ENCODE measurements at regions of chr15 and their contacts with region 1.

Region 1: GRCh38 chr15:101294731-101295606 is at the start of gene SNRPA1:
- DNase-seq: peak; percentile 94 to 98 (median 98)
- ATAC-seq: peak; percentile 80
- H3K4me3 ChIP-seq: peak within 1 kb of the TSS; percentile 68 to 97
- H3K4me3 Mint-ChIP-seq: peak within 1 kb of the TSS; percentile 94
- H3K27ac ChIP-seq: peak within 1 kb of the TSS; percentile 95 to 98
- H3K27ac Mint-ChIP-seq: peak within 1 kb of the TSS; percentile 96
- H3K4me1 ChIP-seq: peaks cover 38% of the 10 kb centered on the region
- H3K4me1 Mint-ChIP-seq: peaks cover 53% of the 10 kb centered on the region
- H3K27me3 ChIP-seq: no peaks in the 10 kb centered on the region
- H3K27me3 Mint-ChIP-seq: no peaks in the 10 kb centered on the region
- CTCF ChIP-seq: no peak
- total RNA-seq, gene SNRPA1: 228 to 247 TPM

Region 2: GRCh38 chr15:100602064-100602822 is 692.7 kb before region 1 on chr15 and contains the starts of genes ASB7 and LINS1:
- CTCF ChIA-PET with region 1: no interaction called
- POLR2A ChIA-PET with region 1: interaction called, 3 read pairs
- intact Hi-C with region 1: loop called in 1 of 2 experiments (anchors 1 kb)
- DNase-seq: peak; percentile 99 to 100 (median 100)
- ATAC-seq: peak; percentile 89
- H3K4me3 ChIP-seq: peak within 1 kb of the TSS; percentile 90 to 95
- H3K4me3 Mint-ChIP-seq: no peak within 1 kb of the TSS
- H3K27ac ChIP-seq: peak within 1 kb of the TSS; percentile 71 to 94
- H3K27ac Mint-ChIP-seq: peak within 1 kb of the TSS; percentile 93
- H3K4me1 ChIP-seq: peaks cover 58% of the 10 kb centered on the region
- H3K4me1 Mint-ChIP-seq: peaks cover 64% of the 10 kb centered on the region
- H3K27me3 ChIP-seq: no peaks in the 10 kb centered on the region
- H3K27me3 Mint-ChIP-seq: no peaks in the 10 kb centered on the region
- CTCF ChIP-seq: no peak
- total RNA-seq, gene ASB7: 17.2 to 19.9 TPM
- total RNA-seq, gene LINS1: 42.8 to 45.9 TPM

Region 3: GRCh38 chr15:100958326-100959065 is 336.5 kb before region 1 on chr15:
- CTCF ChIA-PET with region 1: no interaction called
- POLR2A ChIA-PET with region 1: no interaction called
- intact Hi-C with region 1: no loop called
- DNase-seq: no peak
- ATAC-seq: no peak
- H3K4me3 ChIP-seq: no peak overlapping the region
- H3K4me3 Mint-ChIP-seq: no peak overlapping the region
- H3K27ac ChIP-seq: no peak overlapping the region
- H3K27ac Mint-ChIP-seq: no peak overlapping the region
- H3K4me1 ChIP-seq: no peaks in the 10 kb centered on the region
- H3K4me1 Mint-ChIP-seq: no peaks in the 10 kb centered on the region
- H3K27me3 ChIP-seq: no peaks in the 10 kb centered on the region
- H3K27me3 Mint-ChIP-seq: peaks cover 28% of the 10 kb centered on the region
- CTCF ChIP-seq: no peak

Region 4: DNA sequence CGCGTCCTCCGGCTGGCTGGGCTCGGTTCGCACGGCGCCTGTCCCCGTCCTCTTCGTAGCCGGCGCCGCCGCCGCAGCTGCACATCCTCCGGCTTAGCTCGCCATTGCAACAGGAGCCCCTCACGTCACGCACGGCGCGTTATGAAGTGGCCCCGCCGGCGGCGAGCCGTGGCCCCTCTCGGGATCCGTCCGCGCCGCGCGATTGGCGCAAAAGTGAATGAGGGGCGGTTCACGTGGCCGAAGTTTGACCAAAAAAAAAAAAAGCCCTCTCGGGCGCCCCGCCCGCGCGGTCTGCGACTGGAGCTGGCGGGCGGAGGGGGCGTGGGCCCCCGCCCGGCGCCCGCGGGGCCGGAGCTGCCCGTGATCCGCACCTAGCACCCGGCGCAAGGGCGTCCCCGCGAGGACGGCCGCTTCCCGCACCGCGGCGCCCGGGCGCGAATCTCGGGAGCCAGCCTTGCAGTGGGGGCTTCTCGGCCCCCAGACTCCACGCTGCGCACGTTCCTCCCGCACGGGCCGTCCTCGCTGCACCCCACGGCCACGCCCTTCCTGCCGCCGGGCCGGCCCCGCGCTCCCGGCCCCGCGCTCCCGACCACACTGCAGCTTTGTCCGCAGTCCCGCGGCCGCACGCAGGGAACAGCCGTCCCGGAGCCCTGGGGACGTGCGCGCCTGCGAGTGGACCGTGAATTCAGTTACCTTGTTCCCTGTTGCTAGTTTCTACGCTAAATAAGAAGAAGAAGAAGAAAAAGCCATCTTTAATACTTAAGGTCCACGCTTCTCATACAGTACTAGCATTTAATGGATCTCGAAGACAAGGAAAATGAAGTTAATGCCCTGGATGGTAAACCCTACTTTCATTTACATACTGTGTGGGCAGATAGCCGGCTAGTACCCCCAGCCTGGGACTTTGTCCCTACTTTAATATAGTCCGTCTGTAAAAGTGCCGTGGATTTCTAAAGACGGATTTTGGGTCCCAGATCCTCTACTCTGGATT is 42.8 kb before region 1 on chr15 and contains the start of gene CHSY1:
- CTCF ChIA-PET with region 1: no interaction called
- POLR2A ChIA-PET with region 1: interaction called, 7 read pairs
- intact Hi-C with region 1: loop called (anchors 1 to 2 kb)
- DNase-seq: peak; percentile 64 to 94 (median 86)
- ATAC-seq: peak; percentile 81
- H3K4me3 ChIP-seq: peak within 1 kb of the TSS; percentile 63 to 72
- H3K4me3 Mint-ChIP-seq: peak within 1 kb of the TSS; percentile 93
- H3K27ac ChIP-seq: peak within 1 kb of the TSS; percentile 35 to 48
- H3K27ac Mint-ChIP-seq: peak within 1 kb of the TSS; percentile 90
- H3K4me1 ChIP-seq: peaks cover 25% of the 10 kb centered on the region
- H3K4me1 Mint-ChIP-seq: peaks cover 41% of the 10 kb centered on the region
- H3K27me3 ChIP-seq: no peaks in the 10 kb centered on the region
- H3K27me3 Mint-ChIP-seq: no peaks in the 10 kb centered on the region
- CTCF ChIP-seq: no peak
- total RNA-seq, gene CHSY1: 15.4 to 15.6 TPM

Region 5: DNA sequence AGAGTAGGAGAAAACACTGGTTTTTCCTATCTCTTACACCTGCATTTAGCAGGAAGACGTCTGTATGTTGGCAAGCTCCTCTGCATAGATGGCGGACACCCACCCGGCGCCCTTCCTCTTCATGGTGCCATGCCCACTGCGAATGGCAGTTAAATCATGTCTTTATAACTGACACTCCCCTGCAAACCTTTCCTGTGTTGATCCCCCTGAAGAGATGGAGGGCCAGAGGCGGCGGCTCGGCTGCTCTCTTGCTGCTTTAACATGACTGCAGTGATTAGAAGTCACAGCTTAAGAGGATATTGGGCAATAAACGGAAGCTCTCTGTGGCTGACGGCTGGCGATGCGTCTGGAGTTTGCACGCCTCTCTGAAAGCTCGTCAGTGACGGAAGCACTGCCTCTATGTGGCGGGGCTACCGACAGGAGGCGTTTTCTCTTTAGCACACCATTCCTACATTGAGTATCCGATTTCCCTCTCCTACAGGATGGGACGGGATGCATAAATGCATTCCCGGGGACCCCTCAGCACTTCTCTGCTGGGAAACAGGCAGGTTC is 25.6 kb after region 1 on chr15:
- CTCF ChIA-PET with region 1: interaction called, 5 read pairs
- POLR2A ChIA-PET with region 1: interaction called, 34 read pairs
- intact Hi-C with region 1: loop called in 1 of 2 experiments (anchors 2 kb)
- DNase-seq: peak; percentile 29 to 88 (median 63)
- ATAC-seq: peak; percentile 98
- H3K4me3 ChIP-seq: peak overlapping the region; percentile 45 to 46
- H3K4me3 Mint-ChIP-seq: peak overlapping the region; percentile 78
- H3K27ac ChIP-seq: peak overlapping the region; percentile 46 to 85
- H3K27ac Mint-ChIP-seq: peak overlapping the region; percentile 93
- H3K4me1 ChIP-seq: peaks cover 10% of the 10 kb centered on the region
- H3K4me1 Mint-ChIP-seq: peaks cover 13% of the 10 kb centered on the region
- H3K27me3 ChIP-seq: no peaks in the 10 kb centered on the region
- H3K27me3 Mint-ChIP-seq: peaks cover 5% of the 10 kb centered on the region
- CTCF ChIP-seq: peak; percentile 57

Region 6: DNA sequence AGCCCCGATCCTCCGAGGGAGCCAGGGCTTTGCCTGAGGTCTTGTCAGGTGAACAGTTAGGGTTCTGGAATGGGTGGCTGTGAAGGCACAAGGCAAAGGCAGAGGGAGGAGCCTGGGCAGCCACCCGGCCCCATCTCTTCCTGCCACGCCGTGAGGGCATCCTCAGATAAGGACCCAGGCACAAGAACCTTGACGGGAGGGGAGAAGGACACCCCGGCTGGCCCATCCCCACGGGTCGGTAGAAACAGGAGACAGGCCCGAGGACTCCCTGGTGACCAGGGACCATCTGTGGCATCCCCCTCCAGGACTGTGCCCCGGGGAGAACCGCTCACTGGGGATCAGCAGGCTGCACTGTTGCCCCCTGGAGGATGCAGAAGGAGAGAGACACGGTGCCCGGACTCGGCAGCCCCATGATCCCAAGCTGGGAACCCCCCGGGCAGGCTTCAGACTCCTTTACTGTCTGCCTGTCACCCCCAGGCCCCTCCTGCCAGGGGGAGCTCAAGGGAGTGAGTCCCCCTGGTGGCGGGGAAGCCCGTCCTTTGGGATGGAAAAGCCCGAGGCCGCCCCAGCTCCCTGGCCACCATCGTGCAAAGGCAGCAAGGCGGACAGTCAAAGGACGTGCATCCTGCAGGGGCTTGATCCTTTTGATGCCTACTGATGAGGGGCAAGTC is 206.9 kb after region 1 on chr15:
- CTCF ChIA-PET with region 1: interaction called, 16 read pairs
- POLR2A ChIA-PET with region 1: no interaction called
- intact Hi-C with region 1: loop called in 1 of 2 experiments (anchors 1 kb)
- DNase-seq: peak; percentile 5 to 71 (median 51)
- ATAC-seq: peak; percentile 88
- H3K4me3 ChIP-seq: peak overlapping the region; percentile 7 to 29
- H3K4me3 Mint-ChIP-seq: peak overlapping the region; percentile 66
- H3K27ac ChIP-seq: no peak overlapping the region
- H3K27ac Mint-ChIP-seq: no peak overlapping the region
- H3K4me1 ChIP-seq: peaks cover 14% of the 10 kb centered on the region
- H3K4me1 Mint-ChIP-seq: peaks cover 18% of the 10 kb centered on the region
- H3K27me3 ChIP-seq: no peaks in the 10 kb centered on the region
- H3K27me3 Mint-ChIP-seq: peaks cover 40% of the 10 kb centered on the region
- CTCF ChIP-seq: peak; percentile 28

Region 7: GRCh38 chr15:101652098-101652782 is 357.3 kb after region 1 on chr15 and contains the start of gene TM2D3:
- CTCF ChIA-PET with region 1: interaction called, 4 read pairs
- POLR2A ChIA-PET with region 1: interaction called, 5 read pairs
- intact Hi-C with region 1: loop called (anchors 1 kb)
- DNase-seq: peak; percentile 89 to 98 (median 95)
- ATAC-seq: peak; percentile 92
- H3K4me3 ChIP-seq: peak within 1 kb of the TSS; percentile 91 to 99
- H3K4me3 Mint-ChIP-seq: peak within 1 kb of the TSS; percentile 90
- H3K27ac ChIP-seq: peak within 1 kb of the TSS; percentile 97
- H3K27ac Mint-ChIP-seq: peak within 1 kb of the TSS; percentile 96
- H3K4me1 ChIP-seq: peaks cover 26% of the 10 kb centered on the region
- H3K4me1 Mint-ChIP-seq: peaks cover 39% of the 10 kb centered on the region
- H3K27me3 ChIP-seq: no peaks in the 10 kb centered on the region
- H3K27me3 Mint-ChIP-seq: no peaks in the 10 kb centered on the region
- CTCF ChIP-seq: peak; percentile 76
- total RNA-seq, gene TM2D3: 76.1 to 76.7 TPM

Measured in CD8-positive, alpha-beta T cell (primary cell).